Colonic mucosa (tissue), 4 donors: ENCODE measurements at regions of chr14 and their contacts with region 1.

Region 1: GRCh38 chr14:61837336-61838229 is 75.4 kb downstream of the SNAPC1 start:
- DNase-seq: peak; percentile 81
- H3K4me3 ChIP-seq: no peak overlapping the region
- H3K27ac ChIP-seq: no peak overlapping the region
- H3K4me1 ChIP-seq: no peaks in the 10 kb centered on the region
- H3K27me3 ChIP-seq: no peaks in the 10 kb centered on the region
- CTCF ChIP-seq: peak; percentile 90

Region 2: DNA sequence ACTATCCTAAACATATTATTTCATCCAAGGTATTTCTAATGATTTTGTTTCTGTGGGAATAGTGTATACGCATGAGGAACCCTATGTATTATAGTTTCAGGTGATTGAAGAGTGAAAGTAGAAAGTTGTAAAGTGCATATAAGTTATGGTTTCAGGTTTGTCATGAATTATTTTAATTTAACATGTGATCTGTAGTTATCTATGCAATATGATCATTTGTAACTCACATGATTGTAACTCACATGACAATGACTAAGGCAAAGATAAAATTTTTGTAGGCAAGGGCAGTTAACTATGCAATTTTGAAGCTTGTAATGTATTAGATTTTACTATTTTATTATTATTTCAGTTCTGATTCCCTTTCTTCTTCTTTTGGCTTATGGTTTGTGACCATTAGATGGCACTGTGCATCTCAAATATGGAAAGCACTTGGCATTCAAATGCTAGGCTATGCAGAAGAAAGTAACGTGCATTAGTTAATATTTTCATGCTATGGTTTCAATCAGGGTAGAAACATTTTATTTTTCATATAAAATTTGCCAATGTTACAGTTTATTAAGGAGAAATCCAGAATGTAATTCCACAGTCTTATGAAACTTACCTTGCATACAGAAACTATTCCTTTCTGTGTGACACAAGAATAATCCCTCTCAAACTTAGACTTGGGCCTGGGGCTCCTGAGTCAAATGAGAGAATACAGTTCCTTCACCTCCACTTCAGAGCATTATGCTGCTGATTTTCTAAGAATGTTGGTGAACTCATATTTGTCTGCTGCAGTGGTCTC is 540.7 kb before region 1 on chr14:
- intact Hi-C with region 1: loop called (anchors 5 kb)
- DNase-seq: no peak
- H3K4me3 ChIP-seq: no peak overlapping the region
- H3K27ac ChIP-seq: no peak overlapping the region
- H3K4me1 ChIP-seq: peaks cover 4% of the 10 kb centered on the region
- H3K27me3 ChIP-seq: no peaks in the 10 kb centered on the region
- CTCF ChIP-seq: peak; percentile 44

Region 3: DNA sequence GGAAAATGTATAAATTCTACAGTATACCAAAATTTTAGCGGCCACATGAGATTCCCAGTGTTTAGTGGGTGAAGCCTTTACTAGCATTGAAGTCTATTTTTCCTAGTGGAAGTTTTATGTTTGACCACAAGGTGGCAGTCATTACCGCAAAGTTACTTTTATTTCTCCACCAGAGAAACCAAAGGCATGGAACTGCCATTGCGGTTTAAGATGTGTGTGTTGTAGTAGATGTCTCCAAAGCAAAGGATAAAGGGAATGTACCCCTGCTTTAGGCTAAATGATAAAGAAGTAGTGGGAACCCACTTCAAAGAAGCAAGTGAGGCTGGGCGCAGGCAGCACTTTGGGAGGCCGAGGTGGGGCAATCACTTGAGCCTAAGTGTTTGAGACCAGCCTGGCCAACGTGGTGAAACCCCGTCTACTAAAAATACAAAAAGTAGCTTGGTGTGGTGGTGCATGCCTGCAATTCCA is 375.7 kb before region 1 on chr14:
- intact Hi-C with region 1: loop called (anchors 2 kb)
- DNase-seq: peak; percentile 59
- H3K4me3 ChIP-seq: no peak overlapping the region
- H3K27ac ChIP-seq: no peak overlapping the region
- H3K4me1 ChIP-seq: peaks cover 10% of the 10 kb centered on the region
- H3K27me3 ChIP-seq: no peaks in the 10 kb centered on the region
- CTCF ChIP-seq: peak; percentile 77

Region 4: DNA sequence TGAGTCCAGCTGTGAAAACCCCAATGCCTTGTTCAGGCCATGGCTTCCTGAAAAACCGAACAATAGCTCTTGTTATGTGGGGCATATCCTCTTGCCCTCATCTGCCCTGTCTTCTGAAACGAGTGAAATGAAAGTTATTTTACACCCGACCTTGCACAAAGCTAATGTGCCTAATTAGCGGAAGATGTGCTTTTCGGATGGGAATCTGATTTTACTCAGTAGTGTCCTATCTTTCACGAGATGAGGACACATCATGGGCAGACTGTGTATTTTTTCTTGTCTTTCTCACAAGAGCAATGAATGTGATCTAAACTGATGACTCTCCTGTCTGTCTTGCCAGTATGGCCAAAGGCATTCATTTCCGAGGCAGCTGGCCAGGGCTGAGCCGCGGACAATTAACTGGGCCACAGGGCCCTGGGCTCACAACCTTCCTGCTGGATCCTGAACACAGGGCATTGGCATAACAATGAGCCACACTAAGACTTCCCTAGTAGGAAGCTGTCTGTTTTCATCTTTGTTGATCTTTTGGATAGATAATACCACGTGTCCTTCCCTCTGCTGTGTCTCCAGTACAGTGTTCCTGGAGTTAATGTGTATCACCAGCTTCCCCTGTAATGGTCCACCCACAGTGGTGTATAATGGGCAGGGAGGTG is 228.3 kb before region 1 on chr14:
- intact Hi-C with region 1: no loop called
- DNase-seq: no peak
- H3K4me3 ChIP-seq: no peak overlapping the region
- H3K27ac ChIP-seq: peak overlapping the region; percentile 45
- H3K4me1 ChIP-seq: peaks cover 9% of the 10 kb centered on the region
- H3K27me3 ChIP-seq: no peaks in the 10 kb centered on the region
- CTCF ChIP-seq: no peak

Region 5: DNA sequence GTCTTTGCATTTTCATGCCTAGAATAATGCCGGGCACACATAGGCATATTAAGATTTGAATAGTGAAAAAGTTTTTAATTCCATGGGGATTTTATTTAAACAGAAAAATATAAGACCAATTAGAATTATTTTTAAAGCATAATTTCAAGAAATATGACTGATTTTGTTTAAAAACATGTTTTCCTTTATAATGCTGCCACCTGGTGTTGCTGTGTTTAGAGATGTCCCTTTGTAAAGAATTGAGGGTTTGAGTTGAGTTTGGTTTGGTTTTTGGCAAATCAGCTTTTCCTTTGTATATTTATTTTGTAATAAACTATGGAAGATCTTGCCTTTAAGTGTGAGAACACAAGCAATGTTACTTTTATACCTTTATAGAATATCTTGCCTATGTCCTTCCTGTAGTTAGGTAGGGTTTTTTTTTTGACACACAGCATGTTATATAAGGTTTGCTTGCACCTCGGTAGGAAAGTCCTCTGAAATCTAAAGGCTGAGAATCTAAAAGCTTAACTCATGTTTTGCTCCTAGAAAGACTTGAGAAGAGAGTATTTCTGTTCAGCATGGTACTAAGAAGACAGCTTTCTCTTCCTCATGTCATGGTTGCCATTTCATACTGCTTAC is 106.7 kb before region 1 on chr14:
- intact Hi-C with region 1: loop called (anchors 5 kb)
- DNase-seq: no peak
- H3K4me3 ChIP-seq: no peak overlapping the region
- H3K27ac ChIP-seq: no peak overlapping the region
- H3K4me1 ChIP-seq: peaks cover 6% of the 10 kb centered on the region
- H3K27me3 ChIP-seq: no peaks in the 10 kb centered on the region
- CTCF ChIP-seq: peak; percentile 36

Region 6: GRCh38 chr14:62251237-62251636 is 413.7 kb after region 1 on chr14:
- intact Hi-C with region 1: no loop called
- DNase-seq: no peak
- H3K4me3 ChIP-seq: no peak overlapping the region
- H3K27ac ChIP-seq: no peak overlapping the region
- H3K4me1 ChIP-seq: no peaks in the 10 kb centered on the region
- H3K27me3 ChIP-seq: no peaks in the 10 kb centered on the region
- CTCF ChIP-seq: no peak

Region 7: DNA sequence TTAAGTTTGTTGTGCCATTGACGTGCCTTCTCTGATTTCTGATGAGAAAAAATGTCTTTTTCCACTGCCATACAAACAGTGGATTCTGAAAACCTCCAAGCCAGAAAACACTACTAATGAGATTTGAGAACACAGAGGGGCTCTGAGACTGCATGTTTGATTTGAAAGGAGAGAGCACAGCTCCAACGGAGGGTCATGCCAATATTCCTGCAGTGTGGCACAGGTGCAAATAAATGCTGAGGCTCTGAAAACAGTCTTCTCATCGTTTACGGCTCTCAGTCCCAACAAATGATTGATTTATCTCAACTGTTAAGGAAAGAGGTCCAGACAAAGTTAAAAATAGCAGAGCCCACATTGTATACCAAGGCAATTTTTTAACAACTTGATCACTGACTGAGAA is 1079.0 kb after region 1 on chr14:
- intact Hi-C with region 1: no loop called
- DNase-seq: no peak
- H3K4me3 ChIP-seq: no peak overlapping the region
- H3K27ac ChIP-seq: no peak overlapping the region
- H3K4me1 ChIP-seq: no peaks in the 10 kb centered on the region
- H3K27me3 ChIP-seq: no peaks in the 10 kb centered on the region
- CTCF ChIP-seq: no peak